ENCODE measurements at regions of chr9 and their contacts with region 1.

Region 1: DNA sequence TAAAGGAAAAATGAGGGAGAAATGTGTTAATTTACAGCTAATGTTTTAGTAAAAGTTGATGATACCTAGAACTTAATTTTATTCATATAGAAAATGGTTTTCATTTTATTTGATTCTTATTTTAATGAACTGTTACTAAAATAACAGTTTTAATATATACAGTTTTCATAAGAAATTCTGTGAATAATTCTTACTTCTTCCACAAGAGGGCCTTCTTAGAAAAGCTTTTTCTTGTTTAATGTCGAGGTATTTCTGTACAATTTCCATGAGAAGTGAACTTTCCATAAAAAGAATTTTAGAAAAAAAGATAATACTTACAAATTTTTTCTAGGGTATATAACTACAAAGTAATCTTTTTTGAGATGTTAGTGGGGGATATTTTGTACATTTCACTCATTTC is 73.9 kb downstream of the KLF9 start:
- DNase-seq: no peak
- ATAC-seq: no peak
- H3K4me3 ChIP-seq: no peak overlapping the region
- H3K27ac ChIP-seq: no peak overlapping the region
- H3K4me1 ChIP-seq: no peaks in the 10 kb centered on the region
- H3K27me3 ChIP-seq: no peaks in the 10 kb centered on the region
- CTCF ChIP-seq: peak; percentile 54

Region 2: GRCh38 chr9:69719367-69719766 is 621.2 kb before region 1 on chr9:
- intact Hi-C with region 1: no loop called
- DNase-seq: no peak
- ATAC-seq: no peak
- H3K4me3 ChIP-seq: no peak overlapping the region
- H3K27ac ChIP-seq: no peak overlapping the region
- H3K4me1 ChIP-seq: no peaks in the 10 kb centered on the region
- H3K27me3 ChIP-seq: no peaks in the 10 kb centered on the region
- CTCF ChIP-seq: no peak

Region 3: GRCh38 chr9:70285246-70285645 is 55.3 kb before region 1 on chr9:
- intact Hi-C with region 1: loop called in 1 of 2 experiments (anchors 10 kb)
- DNase-seq: no peak
- ATAC-seq: no peak
- H3K4me3 ChIP-seq: no peak overlapping the region
- H3K27ac ChIP-seq: no peak overlapping the region
- H3K4me1 ChIP-seq: no peaks in the 10 kb centered on the region
- H3K27me3 ChIP-seq: no peaks in the 10 kb centered on the region
- CTCF ChIP-seq: no peak

Region 4: GRCh38 chr9:70510157-70510770 is 169.7 kb after region 1 on chr9:
- intact Hi-C with region 1: loop called in 1 of 2 experiments (anchors 10 kb)
- DNase-seq: peak; percentile 36 to 65
- ATAC-seq: peak in 3 of 4 donors; percentile 65 to 76 (median 70)
- H3K4me3 ChIP-seq: no peak overlapping the region
- H3K27ac ChIP-seq: no peak overlapping the region
- H3K4me1 ChIP-seq: peaks cover 10% of the 10 kb centered on the region
- H3K27me3 ChIP-seq: no peaks in the 10 kb centered on the region
- CTCF ChIP-seq: peak; percentile 63

Measured in psoas muscle (tissue), 8 donors.